ENCODE measurements at regions of chr21 and their contacts with region 1.

Region 1: GRCh38 chr21:36504067-36505058 is 24.4 kb upstream of the CLDN14 start:
- DNase-seq: peak; percentile 57
- H3K4me3 Mint-ChIP-seq: no peak overlapping the region
- H3K27ac Mint-ChIP-seq: no peak overlapping the region
- H3K4me1 Mint-ChIP-seq: peaks cover 6% of the 10 kb centered on the region
- H3K27me3 Mint-ChIP-seq: no peaks in the 10 kb centered on the region
- CTCF ChIP-seq: peak; percentile 83

Region 2: GRCh38 chr21:36419996-36420395 is 84.4 kb before region 1 on chr21:
- CTCF ChIA-PET with region 1: interaction called, 7 read pairs
- POLR2A ChIA-PET with region 1: no interaction called
- intact Hi-C with region 1: loop called (anchors 2 kb)
- DNase-seq: peak; percentile 83
- H3K4me3 Mint-ChIP-seq: no peak overlapping the region
- H3K27ac Mint-ChIP-seq: no peak overlapping the region
- H3K4me1 Mint-ChIP-seq: no peaks in the 10 kb centered on the region
- H3K27me3 Mint-ChIP-seq: no peaks in the 10 kb centered on the region
- CTCF ChIP-seq: peak; percentile 65

Region 3: GRCh38 chr21:36576441-36576840 is 72.1 kb after region 1 on chr21:
- CTCF ChIA-PET with region 1: no interaction called
- POLR2A ChIA-PET with region 1: no interaction called
- intact Hi-C with region 1: no loop called
- DNase-seq: no peak
- H3K4me3 Mint-ChIP-seq: no peak overlapping the region
- H3K27ac Mint-ChIP-seq: no peak overlapping the region
- H3K4me1 Mint-ChIP-seq: no peaks in the 10 kb centered on the region
- H3K27me3 Mint-ChIP-seq: peaks cover 51% of the 10 kb centered on the region
- CTCF ChIP-seq: no peak

Region 4: DNA sequence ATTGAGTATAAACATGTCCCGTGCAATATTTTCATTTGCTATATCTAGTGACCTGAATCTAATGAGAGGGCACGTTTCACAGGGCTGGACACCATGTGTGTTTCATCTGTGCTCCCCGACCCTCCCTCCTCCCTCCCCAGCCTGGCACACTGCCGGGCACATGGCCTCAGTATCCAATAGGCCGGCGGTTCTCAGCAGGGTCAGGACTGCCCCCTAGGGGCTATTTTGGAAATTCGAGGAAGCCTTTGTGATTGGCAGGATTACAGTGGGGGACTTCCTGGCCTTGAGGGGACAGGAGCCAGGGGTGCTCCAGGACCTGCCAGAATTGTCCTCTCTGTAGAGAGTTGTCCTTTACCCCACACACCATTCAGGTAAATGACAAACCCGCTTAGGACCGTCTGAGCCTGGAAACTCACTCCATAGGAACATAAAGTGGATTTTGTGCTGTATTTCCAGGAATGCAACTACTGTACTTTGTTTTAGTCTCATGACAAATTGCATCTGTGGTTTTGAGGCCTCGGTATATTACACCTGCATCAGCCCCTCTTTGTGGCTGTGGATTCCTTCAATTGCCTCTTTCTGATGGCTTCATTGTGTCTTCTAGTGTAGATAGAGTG is 85.1 kb after region 1 on chr21:
- CTCF ChIA-PET with region 1: no interaction called
- POLR2A ChIA-PET with region 1: no interaction called
- intact Hi-C with region 1: loop called (anchors 2 kb)
- DNase-seq: peak; percentile 61
- H3K4me3 Mint-ChIP-seq: no peak overlapping the region
- H3K27ac Mint-ChIP-seq: no peak overlapping the region
- H3K4me1 Mint-ChIP-seq: peaks cover 6% of the 10 kb centered on the region
- H3K27me3 Mint-ChIP-seq: peaks cover 12% of the 10 kb centered on the region
- CTCF ChIP-seq: peak; percentile 66

Region 5: GRCh38 chr21:36917471-36918158 is 413.3 kb after region 1 on chr21:
- CTCF ChIA-PET with region 1: interaction called, 60 read pairs
- POLR2A ChIA-PET with region 1: no interaction called
- intact Hi-C with region 1: no loop called
- DNase-seq: peak; percentile 64
- H3K4me3 Mint-ChIP-seq: no peak overlapping the region
- H3K27ac Mint-ChIP-seq: peak overlapping the region; percentile 31
- H3K4me1 Mint-ChIP-seq: peaks cover 4% of the 10 kb centered on the region
- H3K27me3 Mint-ChIP-seq: no peaks in the 10 kb centered on the region
- CTCF ChIP-seq: peak; percentile 48

Region 6: GRCh38 chr21:36927719-36928117 is 423.4 kb after region 1 on chr21:
- CTCF ChIA-PET with region 1: interaction called, 83 read pairs
- POLR2A ChIA-PET with region 1: no interaction called
- intact Hi-C with region 1: loop called (anchors 1 kb)
- DNase-seq: peak; percentile 85
- H3K4me3 Mint-ChIP-seq: no peak overlapping the region
- H3K27ac Mint-ChIP-seq: no peak overlapping the region
- H3K4me1 Mint-ChIP-seq: peaks cover 8% of the 10 kb centered on the region
- H3K27me3 Mint-ChIP-seq: no peaks in the 10 kb centered on the region
- CTCF ChIP-seq: peak; percentile 79